Colonic mucosa (tissue), 4 donors: ENCODE measurements at regions of chr3 and their contacts with region 1.

Region 1: DNA sequence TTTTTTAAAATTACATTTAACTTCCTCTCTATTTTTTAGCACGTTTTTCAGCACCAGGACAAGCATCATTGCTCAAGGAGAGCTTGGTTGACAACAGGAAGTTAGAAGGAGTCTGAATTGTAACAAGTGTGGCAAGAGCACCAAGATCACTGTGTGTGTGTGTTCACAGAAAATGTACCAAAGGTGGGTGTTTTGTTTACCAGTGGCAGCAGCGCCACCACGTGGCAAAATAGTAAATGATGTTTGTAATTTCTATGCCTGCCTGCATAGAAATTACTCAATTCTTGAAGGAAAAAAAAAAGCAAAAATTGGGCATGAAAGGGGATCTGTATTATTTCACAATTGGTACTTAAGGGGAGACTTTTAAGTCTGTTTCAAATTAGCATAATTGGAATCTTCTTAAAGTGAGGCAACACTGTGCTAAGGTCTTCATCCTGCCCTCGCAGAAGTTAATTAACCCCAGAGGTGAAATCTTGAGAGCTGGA is 7.4 kb upstream of the U2SURP start:
- DNase-seq: peak; percentile 51
- H3K4me3 ChIP-seq: no peak overlapping the region
- H3K27ac ChIP-seq: no peak overlapping the region
- H3K4me1 ChIP-seq: no peaks in the 10 kb centered on the region
- H3K27me3 ChIP-seq: no peaks in the 10 kb centered on the region
- CTCF ChIP-seq: peak; percentile 71

Region 2: GRCh38 chr3:142586803-142587406 is 407.1 kb before region 1 on chr3:
- intact Hi-C with region 1: loop called (anchors 5 kb)
- DNase-seq: peak; percentile 59
- H3K4me3 ChIP-seq: no peak overlapping the region
- H3K27ac ChIP-seq: no peak overlapping the region
- H3K4me1 ChIP-seq: no peaks in the 10 kb centered on the region
- H3K27me3 ChIP-seq: no peaks in the 10 kb centered on the region
- CTCF ChIP-seq: peak; percentile 68

Region 3: GRCh38 chr3:142828703-142829305 is 165.2 kb before region 1 on chr3:
- intact Hi-C with region 1: loop called (anchors 5 kb)
- DNase-seq: peak; percentile 84
- H3K4me3 ChIP-seq: no peak overlapping the region
- H3K27ac ChIP-seq: no peak overlapping the region
- H3K4me1 ChIP-seq: no peaks in the 10 kb centered on the region
- H3K27me3 ChIP-seq: no peaks in the 10 kb centered on the region
- CTCF ChIP-seq: peak; percentile 84